ENCODE measurements at regions of chrX and their contacts with region 1.

Region 1: GRCh38 chrX:153667956-153668396 is 5.6 kb downstream of the PNCK start:
- DNase-seq: peak; percentile 74 to 86 (median 82)
- H3K4me3 ChIP-seq: peak overlapping the region in 4 of 7 experiments; percentile 37 to 70 (median 48)
- H3K27ac ChIP-seq: no peak overlapping the region
- H3K4me1 ChIP-seq: peaks cover 0 to 3% (median under 1%) of the 10 kb centered on the region in 4 experiments
- H3K27me3 ChIP-seq: peaks cover 0 to 48% (median 2%) of the 10 kb centered on the region in 5 experiments

Region 2: GRCh38 chrX:153336121-153336894 is 331.7 kb before region 1 on chrX:
- CTCF ChIA-PET with region 1: no interaction called
- POLR2A ChIA-PET with region 1: no interaction called
- DNase-seq: peak in 2 of 3 donors; percentile 41 to 54
- H3K4me3 ChIP-seq: peak overlapping the region in 1 of 7 experiments; percentile 5
- H3K27ac ChIP-seq: peak overlapping the region; percentile 9 to 33
- H3K4me1 ChIP-seq: peaks cover 0 to 29% (median 16%) of the 10 kb centered on the region in 4 experiments
- H3K27me3 ChIP-seq: peaks cover 0 to 4% (median 0%) of the 10 kb centered on the region in 5 experiments

Region 3: DNA sequence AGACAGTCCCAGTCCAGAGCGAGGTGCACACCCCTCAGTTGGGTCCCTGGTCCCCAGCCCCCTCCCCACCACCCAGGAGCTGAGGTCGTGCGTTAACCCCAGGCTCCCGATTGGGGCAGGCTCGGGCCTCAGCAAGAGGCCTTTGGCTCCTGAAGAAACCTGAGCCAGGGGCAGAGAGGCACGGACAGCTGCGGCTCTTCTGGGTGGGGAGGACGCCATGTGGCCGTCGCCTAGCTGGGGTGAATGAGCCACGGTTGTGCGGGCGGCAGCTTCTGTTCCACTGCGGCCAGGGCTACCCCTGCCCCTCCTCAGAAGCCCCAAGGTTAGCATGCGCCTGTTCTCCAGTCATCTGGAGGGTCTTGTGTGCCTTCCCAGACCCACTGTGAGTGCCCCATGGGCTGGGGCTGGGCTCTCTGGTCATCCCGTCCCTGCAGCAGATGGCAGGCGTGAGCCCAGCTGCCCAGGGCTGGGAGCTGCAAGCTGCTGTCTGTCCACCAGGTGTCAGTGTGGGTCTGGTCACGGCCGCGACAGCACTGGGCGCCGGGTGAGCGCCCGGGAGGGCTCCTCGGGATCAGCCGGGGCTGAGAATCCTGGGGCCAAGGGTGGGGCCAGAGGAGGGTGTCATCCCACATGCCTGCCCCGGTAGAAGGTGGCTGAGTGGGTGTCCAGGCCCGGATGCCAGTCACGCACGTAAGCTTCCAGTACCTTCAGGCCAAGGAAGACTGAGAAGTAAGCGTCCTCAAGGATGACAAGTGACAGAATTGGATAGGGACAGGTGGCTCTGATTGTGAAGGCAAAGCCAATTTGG is 128.6 kb before region 1 on chrX:
- CTCF ChIA-PET with region 1: interaction called, 59 read pairs
- POLR2A ChIA-PET with region 1: no interaction called
- DNase-seq: peak; percentile 27 to 63 (median 59)
- H3K4me3 ChIP-seq: no peak overlapping the region
- H3K27ac ChIP-seq: no peak overlapping the region
- H3K4me1 ChIP-seq: no peaks in the 10 kb centered on the region
- H3K27me3 ChIP-seq: peaks cover 0 to 31% (median 0%) of the 10 kb centered on the region in 5 experiments

Region 4: DNA sequence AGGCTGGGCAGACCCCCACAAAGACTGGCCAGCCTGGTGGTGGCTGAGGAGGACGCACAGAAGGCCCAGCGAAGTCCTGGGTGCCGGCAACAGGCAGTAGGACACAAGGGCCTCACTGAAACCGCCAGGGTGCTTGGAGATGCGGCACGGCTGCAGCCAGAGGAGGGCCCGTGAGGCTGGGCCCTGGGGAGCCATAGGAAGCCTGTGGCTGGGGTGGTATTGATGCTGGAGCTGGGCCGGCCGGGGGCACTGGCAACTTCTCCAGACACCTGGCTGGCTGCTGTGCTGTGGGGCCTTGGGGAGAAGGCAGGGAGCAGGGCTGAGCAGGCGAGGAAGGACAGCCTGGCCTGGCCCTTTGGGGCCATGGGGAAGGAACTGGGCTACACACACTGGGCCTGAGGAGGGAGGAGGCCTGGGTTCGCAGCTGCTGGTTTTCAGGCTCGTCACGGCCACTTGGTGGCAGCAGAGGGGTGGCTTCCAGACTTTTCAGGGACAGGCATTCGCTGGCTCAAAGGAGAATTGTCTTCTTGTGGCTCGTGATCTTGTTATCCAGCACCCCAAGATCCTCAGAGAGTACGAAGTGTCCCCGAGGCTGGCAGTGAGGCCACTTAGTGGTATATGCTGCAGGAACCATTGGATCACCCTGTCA is 113.3 kb before region 1 on chrX:
- CTCF ChIA-PET with region 1: interaction called, 37 read pairs
- POLR2A ChIA-PET with region 1: no interaction called
- DNase-seq: peak; percentile 48 to 76 (median 69)
- H3K4me3 ChIP-seq: no peak overlapping the region
- H3K27ac ChIP-seq: no peak overlapping the region
- H3K4me1 ChIP-seq: peaks cover 0 to 7% (median 2%) of the 10 kb centered on the region in 4 experiments
- H3K27me3 ChIP-seq: peaks cover 0 to 4% (median 0%) of the 10 kb centered on the region in 5 experiments

Region 5: GRCh38 chrX:153578200-153578835 is 89.7 kb before region 1 on chrX:
- CTCF ChIA-PET with region 1: interaction called, 10 read pairs
- POLR2A ChIA-PET with region 1: no interaction called
- DNase-seq: no peak
- H3K4me3 ChIP-seq: no peak overlapping the region
- H3K27ac ChIP-seq: no peak overlapping the region
- H3K4me1 ChIP-seq: peaks cover 0 to 13% (median 8%) of the 10 kb centered on the region in 4 experiments
- H3K27me3 ChIP-seq: peaks cover 0 to 23% (median 0%) of the 10 kb centered on the region in 5 experiments

Region 6: DNA sequence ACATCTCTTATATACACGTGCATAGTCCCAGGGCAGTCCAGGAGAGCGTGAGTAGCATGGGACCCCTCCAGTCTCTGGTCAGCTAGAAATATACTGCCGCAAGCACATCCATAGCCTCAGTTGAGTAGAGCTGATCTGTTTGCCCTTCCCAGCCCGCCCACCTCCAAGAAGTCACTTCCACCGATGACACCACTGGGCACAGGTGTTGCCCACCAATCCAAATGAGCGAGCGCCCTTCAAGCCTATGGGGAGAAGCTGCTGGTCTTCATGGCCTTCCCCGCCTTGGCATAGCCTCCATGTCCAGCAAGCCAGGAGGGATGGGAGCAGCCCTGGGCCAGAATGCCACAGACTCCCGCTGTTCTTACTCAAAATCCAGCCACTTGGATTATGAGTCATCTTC is 10.8 kb before region 1 on chrX:
- CTCF ChIA-PET with region 1: interaction called, 35 read pairs
- POLR2A ChIA-PET with region 1: no interaction called
- DNase-seq: no peak
- H3K4me3 ChIP-seq: no peak overlapping the region
- H3K27ac ChIP-seq: no peak overlapping the region
- H3K4me1 ChIP-seq: no peaks in the 10 kb centered on the region
- H3K27me3 ChIP-seq: peaks cover 3 to 13% (median 8%) of the 10 kb centered on the region in 5 experiments

Region 7: GRCh38 chrX:153684467-153685155 is 16.6 kb after region 1 on chrX:
- CTCF ChIA-PET with region 1: interaction called, 11 read pairs
- POLR2A ChIA-PET with region 1: no interaction called
- DNase-seq: no peak
- H3K4me3 ChIP-seq: no peak overlapping the region
- H3K27ac ChIP-seq: no peak overlapping the region
- H3K4me1 ChIP-seq: peaks cover 0 to 3% (median 0%) of the 10 kb centered on the region in 4 experiments
- H3K27me3 ChIP-seq: peaks cover 0 to 59% (median 2%) of the 10 kb centered on the region in 5 experiments

Measured in common myeloid progenitor, CD34-positive (primary cell).